ENCODE measurements at regions of chr2 and their contacts with region 1.

Region 1: DNA sequence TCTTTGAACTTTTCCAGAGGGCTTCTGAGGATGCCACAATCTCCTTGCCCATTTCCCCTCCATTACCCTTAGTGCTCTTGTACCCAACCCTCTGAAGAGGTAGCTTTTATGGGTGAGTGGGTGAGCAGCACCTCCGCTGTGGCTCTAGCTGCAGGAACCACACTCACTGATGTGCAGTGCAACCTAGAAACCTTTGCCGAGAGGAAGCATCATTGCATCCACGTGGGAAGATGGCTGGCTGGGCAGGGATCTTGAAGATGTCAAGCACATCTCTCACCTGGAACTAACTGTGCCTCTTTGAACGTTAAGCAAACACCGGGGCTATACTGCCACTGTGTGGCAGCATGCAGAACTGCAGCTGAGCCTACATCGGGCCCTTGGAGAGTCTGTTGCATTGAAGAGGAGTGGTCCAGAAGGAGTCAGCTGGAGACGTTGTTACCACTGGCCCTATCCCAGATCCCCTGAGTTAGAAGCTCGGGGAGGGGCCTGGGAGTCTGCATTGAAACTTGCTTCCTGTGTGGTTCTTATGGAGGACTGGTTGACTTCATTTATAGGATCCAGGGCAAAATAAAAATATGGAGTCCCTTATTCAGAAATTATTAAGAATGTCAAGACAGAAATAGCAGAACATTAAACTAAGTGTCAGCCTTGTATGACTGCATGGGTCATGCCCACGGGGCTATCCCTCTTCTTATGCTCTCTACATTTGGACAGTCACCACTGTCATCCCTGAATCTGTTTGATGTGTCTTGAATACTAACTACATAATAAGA is 28.7 kb downstream of the IGFBP5 start:
- DNase-seq: peak in 2 of 3 donors; percentile 81 to 83
- ATAC-seq: peak; percentile 88
- H3K4me3 ChIP-seq: no peak overlapping the region
- H3K4me1 ChIP-seq: peaks cover 6% of the 10 kb centered on the region
- CTCF ChIP-seq: peak; percentile 93

Region 2: DNA sequence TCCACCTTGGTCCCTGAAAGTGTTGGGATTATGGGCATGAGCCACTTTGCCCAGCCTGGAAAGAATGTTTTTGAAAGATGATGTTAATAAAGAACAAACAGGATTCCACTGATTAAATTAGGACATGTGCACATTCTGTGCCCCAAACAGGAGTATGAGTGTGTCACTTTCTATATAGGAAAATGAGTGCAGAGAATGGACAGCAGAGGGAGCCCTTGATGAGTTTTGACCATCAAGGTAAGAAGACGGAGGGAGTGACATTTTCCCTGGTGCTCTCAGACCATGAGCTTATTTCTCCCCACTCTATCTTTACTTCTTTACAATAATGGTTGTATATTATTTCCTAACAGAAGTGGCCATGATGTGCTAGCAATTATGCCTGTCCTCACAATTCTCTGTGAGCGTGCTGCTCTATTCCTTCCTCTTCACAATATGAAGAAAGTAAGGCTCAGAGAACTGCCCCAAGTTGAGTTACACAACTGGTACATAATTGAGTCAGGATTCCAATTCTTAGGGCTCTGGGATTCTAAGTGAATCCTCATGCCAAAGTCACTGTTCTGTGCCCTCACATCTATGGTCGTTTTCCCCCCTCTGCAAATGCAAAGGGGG is 147.4 kb before region 1 on chr2:
- intact Hi-C with region 1: loop called (anchors 2 kb)
- DNase-seq: peak in 1 of 3 donors; percentile 93
- ATAC-seq: peak; percentile 85
- H3K4me3 ChIP-seq: no peak overlapping the region
- H3K4me1 ChIP-seq: no peaks in the 10 kb centered on the region
- CTCF ChIP-seq: peak; percentile 35